ENCODE measurements at regions of chr20 and their contacts with region 1.

Region 1: GRCh38 chr20:208942-209566 is 18.0 kb upstream of the DEFB129 start:
- DNase-seq: no peak
- ATAC-seq: no peak
- H3K4me3 ChIP-seq: no peak overlapping the region
- H3K27ac ChIP-seq: no peak overlapping the region
- H3K4me1 ChIP-seq: no peaks in the 10 kb centered on the region
- H3K27me3 ChIP-seq: no peaks in the 10 kb centered on the region

Region 2: DNA sequence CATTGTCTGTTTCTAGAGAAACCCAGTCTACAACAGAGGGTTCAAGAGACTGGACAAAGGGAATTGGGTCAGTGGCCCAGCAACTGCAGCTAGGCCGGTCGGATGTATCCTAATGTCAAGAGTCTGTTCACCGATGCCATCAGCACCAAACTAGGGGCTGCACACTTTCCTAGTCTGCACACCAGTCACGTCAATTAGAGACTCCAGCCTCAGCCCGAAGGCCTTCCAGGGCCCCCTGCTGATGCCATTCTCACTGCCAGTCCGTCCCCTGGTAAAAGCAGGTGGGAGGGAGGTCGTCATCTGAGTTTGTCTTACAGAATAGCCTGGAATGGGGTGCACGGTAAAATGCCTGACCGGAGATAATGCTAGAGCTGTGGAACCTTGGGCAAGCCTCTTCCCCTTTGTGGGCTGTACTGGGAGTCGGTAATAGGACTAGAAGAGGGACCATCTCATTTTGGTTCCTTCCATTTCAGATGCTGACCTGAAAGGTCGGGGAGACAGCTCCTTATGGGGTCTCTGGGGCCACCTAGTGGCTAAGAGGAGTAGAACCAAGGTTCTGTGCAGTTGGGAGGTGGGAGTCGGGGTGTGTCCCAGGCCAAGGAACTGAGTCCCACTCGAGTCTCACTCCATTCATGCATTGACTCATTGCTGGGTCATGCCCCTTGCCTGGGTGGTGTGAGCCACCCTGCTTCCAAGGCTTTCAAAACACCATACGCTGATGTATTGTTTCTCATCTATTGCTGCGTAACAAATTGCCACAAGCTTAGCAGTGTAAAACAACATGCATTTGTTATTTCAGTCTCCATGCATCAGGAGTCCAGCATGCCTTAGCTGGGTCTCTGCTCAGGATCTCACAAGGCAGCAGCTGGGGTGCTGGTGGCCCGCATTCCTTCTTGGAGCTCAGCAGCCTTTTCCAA is 121.4 kb after region 1 on chr20:
- intact Hi-C with region 1: loop called in 1 of 2 experiments (anchors 5 kb)
- DNase-seq: peak; percentile 60 to 70
- ATAC-seq: peak; percentile 36
- H3K4me3 ChIP-seq: no peak overlapping the region
- H3K27ac ChIP-seq: no peak overlapping the region
- H3K4me1 ChIP-seq: no peaks in the 10 kb centered on the region
- H3K27me3 ChIP-seq: no peaks in the 10 kb centered on the region